AG04450 (cell line): ENCODE measurements at regions of chr10 and their contacts with region 1.

Region 1: GRCh38 chr10:122565728-122566206 is 5.2 kb downstream of the DMBT1 start:
- DNase-seq: peak; percentile 72
- H3K4me3 ChIP-seq: peak overlapping the region; percentile 35
- H3K27ac ChIP-seq: no peak overlapping the region
- H3K27me3 ChIP-seq: peaks cover 16% of the 10 kb centered on the region
- CTCF ChIP-seq: peak; percentile 91

Region 2: GRCh38 chr10:122126763-122127659 is 438.8 kb before region 1 on chr10:
- CTCF ChIA-PET with region 1: no interaction called
- POLR2A ChIA-PET with region 1: no interaction called
- DNase-seq: peak; percentile 89
- H3K4me3 ChIP-seq: no peak overlapping the region
- H3K27ac ChIP-seq: peak overlapping the region; percentile 75
- H3K27me3 ChIP-seq: no peaks in the 10 kb centered on the region
- CTCF ChIP-seq: no peak

Region 3: DNA sequence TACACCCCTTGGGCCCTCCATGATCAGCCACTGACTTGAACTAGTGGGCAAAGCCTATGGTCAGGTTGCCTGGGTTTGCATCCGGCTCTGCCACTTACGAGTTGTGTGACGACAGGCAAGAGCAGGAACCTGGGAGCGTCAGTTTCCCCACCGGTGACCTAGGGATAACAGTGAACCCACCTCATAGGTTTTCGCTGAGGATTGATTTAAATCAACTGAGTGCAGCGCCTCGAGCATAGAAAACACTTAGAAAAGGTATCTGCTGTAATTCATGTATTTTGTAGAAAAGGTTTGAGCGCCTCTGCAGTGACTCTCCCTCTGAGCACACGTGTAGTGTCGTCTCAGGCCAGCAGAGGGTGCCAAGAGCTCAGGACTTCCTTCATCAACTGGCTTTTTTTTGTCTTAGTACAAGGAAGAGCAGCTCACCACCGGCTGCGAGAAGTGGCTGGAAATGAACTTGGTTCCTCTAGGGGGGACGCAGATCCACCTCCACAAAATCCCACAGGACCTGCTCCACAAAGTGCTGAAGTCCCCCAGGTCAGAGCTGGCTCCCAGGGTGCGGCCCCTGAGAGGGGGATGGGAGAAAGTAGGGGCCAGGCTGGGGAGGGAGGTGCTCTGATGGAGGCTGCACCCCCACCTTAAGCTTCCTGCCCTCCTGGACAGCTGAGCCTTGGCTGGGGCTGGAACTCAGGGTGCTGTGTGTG is 267.0 kb before region 1 on chr10:
- CTCF ChIA-PET with region 1: interaction called, 93 read pairs
- POLR2A ChIA-PET with region 1: no interaction called
- DNase-seq: peak; percentile 58
- H3K4me3 ChIP-seq: peak overlapping the region; percentile 48
- H3K27ac ChIP-seq: no peak overlapping the region
- H3K27me3 ChIP-seq: peaks cover 18% of the 10 kb centered on the region
- CTCF ChIP-seq: peak; percentile 94

Region 4: DNA sequence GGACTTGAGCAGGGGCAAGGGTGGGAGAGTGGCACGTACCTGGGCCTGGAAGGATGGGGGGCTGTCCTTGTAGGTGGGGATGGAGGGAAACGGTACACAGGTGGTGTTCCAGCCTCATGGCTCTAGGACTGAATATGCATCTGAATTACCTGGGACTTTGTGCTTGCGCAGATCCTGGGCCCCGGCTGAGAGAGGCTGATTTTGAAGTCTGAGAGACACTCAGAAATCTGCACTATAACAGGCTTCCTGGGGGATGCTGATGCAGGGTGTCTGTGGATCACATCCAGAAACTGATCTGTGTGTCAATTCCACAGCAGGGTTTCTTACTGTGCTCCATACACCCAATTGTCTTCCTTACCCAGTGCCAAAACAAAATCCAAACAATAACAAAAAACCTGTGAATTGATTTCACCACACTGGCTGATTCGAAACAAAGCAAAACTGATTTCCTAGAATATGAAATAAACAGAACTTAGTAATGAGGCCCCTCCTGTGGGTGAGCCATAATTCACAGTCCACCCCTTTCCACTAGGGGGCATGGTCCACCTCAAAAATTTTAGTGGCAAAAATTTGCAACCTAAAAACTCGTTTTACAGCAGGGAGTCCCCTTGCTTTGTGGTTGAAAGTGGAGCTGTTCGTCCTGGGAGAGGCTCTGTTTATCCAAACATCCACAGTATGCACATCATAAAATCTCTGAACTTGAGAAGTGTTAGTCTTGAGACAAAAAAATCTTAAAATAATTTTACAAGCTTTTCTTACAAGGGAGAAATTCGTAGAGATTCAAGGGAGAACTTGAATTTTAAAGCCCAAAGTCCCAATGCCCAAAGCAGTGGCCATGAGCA is 223.3 kb before region 1 on chr10:
- CTCF ChIA-PET with region 1: interaction called, 55 read pairs
- POLR2A ChIA-PET with region 1: no interaction called
- DNase-seq: peak; percentile 20
- H3K4me3 ChIP-seq: no peak overlapping the region
- H3K27ac ChIP-seq: no peak overlapping the region
- H3K27me3 ChIP-seq: peaks cover 5% of the 10 kb centered on the region
- CTCF ChIP-seq: peak; percentile 85

Region 5: GRCh38 chr10:122419876-122420623 is 145.7 kb before region 1 on chr10:
- CTCF ChIA-PET with region 1: interaction called, 10 read pairs
- POLR2A ChIA-PET with region 1: no interaction called
- DNase-seq: peak; percentile 45
- H3K4me3 ChIP-seq: no peak overlapping the region
- H3K27ac ChIP-seq: no peak overlapping the region
- H3K27me3 ChIP-seq: no peaks in the 10 kb centered on the region
- CTCF ChIP-seq: no peak

Region 6: GRCh38 chr10:122441961-122442360 is 123.8 kb before region 1 on chr10:
- CTCF ChIA-PET with region 1: interaction called, 19 read pairs
- POLR2A ChIA-PET with region 1: no interaction called
- DNase-seq: no peak
- H3K4me3 ChIP-seq: no peak overlapping the region
- H3K27ac ChIP-seq: no peak overlapping the region
- H3K27me3 ChIP-seq: no peaks in the 10 kb centered on the region
- CTCF ChIP-seq: no peak

Region 7: DNA sequence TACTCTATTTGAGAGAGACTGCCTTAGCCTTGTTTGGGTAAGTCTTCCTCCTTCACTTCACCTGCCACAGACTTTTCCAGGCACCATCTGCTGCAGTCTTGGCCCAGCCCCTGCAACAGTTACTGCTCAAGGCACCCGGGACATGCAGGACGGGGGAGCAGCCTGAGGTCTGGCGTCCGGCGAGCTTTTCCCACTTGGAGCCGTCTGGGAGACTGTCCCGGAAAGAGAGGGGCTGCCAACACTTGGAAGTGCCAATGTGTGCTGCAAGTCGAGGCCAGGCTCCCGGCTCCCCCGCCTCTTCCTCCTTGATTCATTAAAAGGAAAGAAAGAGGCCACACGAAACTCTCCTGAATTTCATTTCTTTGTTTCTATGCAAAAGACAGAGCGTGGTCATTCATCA is 90.7 kb before region 1 on chr10:
- CTCF ChIA-PET with region 1: interaction called, 13 read pairs
- POLR2A ChIA-PET with region 1: no interaction called
- DNase-seq: no peak
- H3K4me3 ChIP-seq: no peak overlapping the region
- H3K27ac ChIP-seq: peak overlapping the region; percentile 65
- H3K27me3 ChIP-seq: no peaks in the 10 kb centered on the region
- CTCF ChIP-seq: no peak

Region 8: DNA sequence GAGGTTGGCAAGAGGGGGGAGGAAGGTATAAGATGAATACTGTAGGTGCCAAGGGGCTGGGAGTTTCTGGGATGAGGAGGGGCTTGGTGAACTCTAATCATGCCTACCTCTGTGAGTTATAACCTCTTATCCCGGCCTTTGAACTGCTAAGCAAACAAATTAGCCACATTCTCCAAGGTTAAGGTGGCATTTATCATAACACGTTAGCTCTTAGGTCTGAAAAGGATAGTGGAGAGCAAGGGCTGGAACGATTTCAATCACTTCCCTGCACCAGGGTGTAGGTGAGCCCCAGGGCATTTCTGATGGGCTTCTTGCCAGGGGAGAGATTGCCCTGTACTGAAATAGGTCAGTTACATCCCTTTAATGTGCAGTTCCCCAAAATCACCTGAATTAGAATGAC is 33.8 kb before region 1 on chr10:
- CTCF ChIA-PET with region 1: no interaction called
- POLR2A ChIA-PET with region 1: no interaction called
- DNase-seq: no peak
- H3K4me3 ChIP-seq: no peak overlapping the region
- H3K27ac ChIP-seq: no peak overlapping the region
- H3K27me3 ChIP-seq: peaks cover 17% of the 10 kb centered on the region
- CTCF ChIP-seq: no peak

Region 9: GRCh38 chr10:122911889-122912484 is 346.2 kb after region 1 on chr10:
- CTCF ChIA-PET with region 1: no interaction called
- POLR2A ChIA-PET with region 1: no interaction called
- DNase-seq: no peak
- H3K4me3 ChIP-seq: no peak overlapping the region
- H3K27ac ChIP-seq: no peak overlapping the region
- H3K27me3 ChIP-seq: no peaks in the 10 kb centered on the region
- CTCF ChIP-seq: no peak